ENCODE measurements at regions of chr1 and their contacts with region 1.

Region 1: DNA sequence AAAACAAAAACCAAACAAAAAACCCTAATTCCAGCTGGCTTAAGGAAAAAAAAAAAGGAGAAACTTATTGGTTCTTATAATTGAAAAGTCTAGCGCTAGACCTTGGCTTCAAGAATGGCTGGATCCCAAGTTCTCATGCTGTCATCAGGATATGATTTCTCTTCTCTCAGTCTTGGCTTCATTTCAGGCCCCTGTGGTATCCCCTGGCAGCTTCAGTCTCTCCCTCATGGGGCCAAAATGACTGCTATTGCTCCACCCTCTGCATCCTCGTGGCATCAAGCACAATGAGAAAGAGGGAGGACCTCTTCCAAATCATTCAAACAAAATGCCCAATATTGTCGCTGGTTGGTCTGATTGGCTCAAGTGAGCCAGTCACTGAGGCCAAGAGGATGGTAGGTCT is 80.7 kb downstream of the GIPC2 start:
- DNase-seq: no peak
- CTCF ChIP-seq: no peak

Region 2: GRCh38 chr1:78607334-78607927 is 480.9 kb after region 1 on chr1:
- in situ Hi-C with region 1: loop called (anchors 10 kb)
- DNase-seq: peak; percentile 3
- CTCF ChIP-seq: peak; percentile 40

Measured in GM13977 (cell line).